ENCODE measurements at regions of chr10 and their contacts with region 1.

Region 1: GRCh38 chr10:78972947-78973900 is 95.5 kb upstream of the ZMIZ1 start:
- DNase-seq: peak; percentile 80
- H3K4me3 Mint-ChIP-seq: peak overlapping the region; percentile 37
- H3K27ac Mint-ChIP-seq: peak overlapping the region; percentile 8
- H3K4me1 Mint-ChIP-seq: peaks cover 9% of the 10 kb centered on the region
- H3K27me3 Mint-ChIP-seq: no peaks in the 10 kb centered on the region

Region 2: GRCh38 chr10:78139341-78139740 is 833.9 kb before region 1 on chr10:
- CTCF ChIA-PET with region 1: no interaction called
- intact Hi-C with region 1: no loop called
- DNase-seq: no peak
- H3K4me3 Mint-ChIP-seq: no peak overlapping the region
- H3K27ac Mint-ChIP-seq: no peak overlapping the region
- H3K4me1 Mint-ChIP-seq: no peaks in the 10 kb centered on the region
- H3K27me3 Mint-ChIP-seq: peaks cover 11% of the 10 kb centered on the region

Region 3: DNA sequence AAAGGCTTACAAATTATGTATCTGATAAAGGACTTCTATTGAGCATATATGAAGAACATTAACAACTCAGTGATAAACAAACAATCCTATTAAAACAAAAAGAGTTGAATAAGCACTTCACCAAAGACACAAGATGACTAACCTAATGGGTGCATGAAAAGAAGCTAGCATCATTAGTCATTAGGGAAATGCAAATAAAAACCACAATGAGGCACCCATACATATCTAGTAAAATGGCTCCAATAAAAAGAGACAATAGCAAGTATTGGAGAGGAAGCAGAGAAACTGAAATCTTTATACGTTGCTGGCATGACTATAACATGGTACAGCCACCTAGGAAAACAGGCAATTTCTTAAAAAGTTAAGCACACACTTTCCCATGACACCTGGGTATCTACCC is 18.0 kb after region 1 on chr10:
- CTCF ChIA-PET with region 1: interaction called, 3 read pairs
- intact Hi-C with region 1: loop called (anchors 1 kb)
- DNase-seq: no peak
- H3K4me3 Mint-ChIP-seq: no peak overlapping the region
- H3K27ac Mint-ChIP-seq: no peak overlapping the region
- H3K4me1 Mint-ChIP-seq: peaks cover 9% of the 10 kb centered on the region
- H3K27me3 Mint-ChIP-seq: no peaks in the 10 kb centered on the region

Region 4: DNA sequence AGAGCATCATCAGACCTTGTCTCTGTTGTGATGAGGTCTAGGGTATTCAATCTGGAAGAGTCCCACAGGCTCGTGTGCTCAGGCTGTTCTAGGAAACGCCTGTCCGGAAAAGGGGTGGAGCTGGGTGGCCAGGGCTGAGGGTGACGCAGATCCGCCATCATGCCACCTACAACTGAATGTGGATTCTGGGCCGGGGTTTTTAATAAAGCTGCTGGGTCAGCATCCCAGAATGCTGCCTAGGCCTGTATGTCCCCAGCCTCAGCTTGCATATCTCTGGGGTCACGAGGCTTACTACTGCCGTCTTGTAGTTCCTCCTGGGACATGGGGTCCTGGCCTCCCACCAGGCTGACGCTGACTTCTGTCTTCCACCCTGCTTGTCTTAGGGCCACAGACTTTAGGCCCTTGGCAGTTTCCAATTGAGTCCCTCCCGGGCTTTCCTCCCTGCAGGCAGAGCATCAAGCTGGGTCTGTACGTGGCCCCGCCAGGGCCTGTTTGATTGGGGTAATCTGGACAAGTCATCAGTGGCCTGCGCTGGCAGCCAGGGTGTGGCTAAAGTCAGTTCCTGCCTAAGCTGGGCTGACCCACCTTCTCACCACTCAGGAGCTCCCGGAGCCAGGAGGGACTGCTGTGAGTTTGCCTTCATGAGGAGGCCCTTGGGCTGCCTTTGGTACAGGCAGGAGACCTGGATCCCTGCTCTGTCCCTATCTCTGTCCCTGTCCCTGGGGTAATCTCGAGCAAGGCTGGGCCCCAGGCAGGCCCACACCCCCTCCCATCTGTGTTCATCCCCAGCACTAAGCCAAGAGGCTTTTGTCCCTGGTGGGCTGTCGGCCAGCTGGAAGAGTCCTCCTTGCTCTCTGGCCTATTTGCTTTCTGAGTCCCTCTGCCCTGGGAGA is 175.5 kb after region 1 on chr10:
- CTCF ChIA-PET with region 1: no interaction called
- intact Hi-C with region 1: loop called (anchors 2 kb)
- DNase-seq: no peak
- H3K4me3 Mint-ChIP-seq: no peak overlapping the region
- H3K27ac Mint-ChIP-seq: no peak overlapping the region
- H3K4me1 Mint-ChIP-seq: peaks cover 54% of the 10 kb centered on the region
- H3K27me3 Mint-ChIP-seq: no peaks in the 10 kb centered on the region

Region 5: GRCh38 chr10:79331709-79332108 is 358.5 kb after region 1 on chr10:
- CTCF ChIA-PET with region 1: no interaction called
- intact Hi-C with region 1: loop called (anchors 5 kb)
- DNase-seq: peak; percentile 95
- H3K4me3 Mint-ChIP-seq: peak overlapping the region; percentile 28
- H3K27ac Mint-ChIP-seq: peak overlapping the region; percentile 93
- H3K4me1 Mint-ChIP-seq: peaks cover 43% of the 10 kb centered on the region
- H3K27me3 Mint-ChIP-seq: no peaks in the 10 kb centered on the region

Region 6: GRCh38 chr10:79981450-79982361 is 1008.5 kb after region 1 on chr10:
- CTCF ChIA-PET with region 1: no interaction called
- intact Hi-C with region 1: no loop called
- DNase-seq: peak; percentile 24
- H3K4me3 Mint-ChIP-seq: peak overlapping the region; percentile 62
- H3K27ac Mint-ChIP-seq: no peak overlapping the region
- H3K4me1 Mint-ChIP-seq: peaks cover 13% of the 10 kb centered on the region
- H3K27me3 Mint-ChIP-seq: peaks cover 41% of the 10 kb centered on the region

Region 7: GRCh38 chr10:80453701-80454513 is 1480.7 kb after region 1 on chr10 and contains the start of gene TSPAN14:
- CTCF ChIA-PET with region 1: no interaction called
- intact Hi-C with region 1: loop called (anchors 10 kb)
- DNase-seq: peak; percentile 74
- H3K4me3 Mint-ChIP-seq: peak within 1 kb of the TSS; percentile 98
- H3K27ac Mint-ChIP-seq: peak within 1 kb of the TSS; percentile 93
- H3K4me1 Mint-ChIP-seq: peaks cover 44% of the 10 kb centered on the region
- H3K27me3 Mint-ChIP-seq: no peaks in the 10 kb centered on the region
- total RNA-seq, gene TSPAN14: 33.5 to 35.5 TPM